ENCODE measurements at regions of chr10 and their contacts with region 1.

Region 1: GRCh38 chr10:74078037-74078436 is 72.6 kb downstream of the AP3M1 start:
- DNase-seq: no peak

Region 2: GRCh38 chr10:73886085-73886529 is 191.9 kb before region 1 on chr10:
- intact Hi-C with region 1: loop called in 1 of 2 experiments (anchors 5 kb)
- DNase-seq: peak; percentile 87

Region 3: DNA sequence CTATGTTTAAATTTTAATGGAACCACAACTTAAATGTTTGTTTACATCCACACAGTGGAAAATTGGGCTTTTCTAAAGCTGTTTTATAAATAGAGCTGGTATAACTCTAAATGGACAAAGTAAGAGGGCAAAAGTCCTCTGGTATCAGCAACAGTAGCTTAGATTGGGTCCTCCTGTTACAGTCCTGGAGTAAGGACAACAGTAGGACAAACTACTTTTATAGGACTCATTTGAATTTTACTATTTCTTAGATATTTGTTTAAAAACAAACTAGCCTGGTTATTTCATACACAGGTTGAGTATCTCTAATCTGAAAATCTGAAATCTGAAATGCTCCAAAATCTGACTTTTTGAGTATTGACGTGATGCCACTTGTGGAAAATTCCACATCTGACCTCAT is 71.8 kb before region 1 on chr10:
- intact Hi-C with region 1: loop called in 1 of 2 experiments (anchors 2 kb)
- DNase-seq: no peak

Region 4: DNA sequence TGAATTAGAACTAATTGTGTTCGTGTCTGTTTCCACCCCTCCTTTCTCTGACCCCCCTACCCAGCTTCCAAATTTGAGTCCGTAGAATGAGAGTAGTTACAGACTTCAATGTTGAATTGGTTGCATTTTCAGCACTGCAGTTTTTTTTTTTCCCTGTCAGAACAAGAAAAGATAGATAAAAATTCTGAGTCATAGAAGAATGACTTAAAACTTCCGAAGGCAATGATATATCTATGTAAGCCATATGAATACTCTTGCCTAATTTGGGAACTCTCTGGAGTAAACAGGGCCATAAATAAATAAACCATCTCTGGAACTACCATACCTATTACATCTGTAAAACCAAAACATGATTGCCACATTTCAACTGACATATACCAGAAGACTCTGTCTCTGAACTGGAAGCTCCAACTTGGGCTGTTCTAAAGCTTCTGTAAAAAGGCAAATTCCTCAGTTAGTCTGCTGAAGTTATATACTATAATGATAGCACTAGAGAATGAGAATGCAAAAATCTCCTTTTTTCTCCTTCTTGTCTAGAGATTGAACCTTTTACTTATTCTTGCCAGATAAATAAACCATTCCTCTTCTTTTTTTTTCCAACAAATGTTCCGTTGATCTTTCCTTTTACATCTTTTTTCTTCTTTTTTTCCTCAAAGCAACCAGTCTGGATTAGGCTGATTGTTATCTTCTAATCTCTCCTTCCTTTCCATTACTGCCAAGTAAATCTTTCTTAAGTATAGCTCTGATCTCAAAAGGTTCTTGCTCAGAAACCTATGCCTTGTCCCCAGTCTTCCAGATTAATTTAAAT is 56.6 kb before region 1 on chr10:
- intact Hi-C with region 1: loop called in 1 of 2 experiments (anchors 10 kb)
- DNase-seq: no peak